Ascending aorta (tissue), 2 donors: ENCODE measurements at regions of chr2 and their contacts with region 1.

Region 1: DNA sequence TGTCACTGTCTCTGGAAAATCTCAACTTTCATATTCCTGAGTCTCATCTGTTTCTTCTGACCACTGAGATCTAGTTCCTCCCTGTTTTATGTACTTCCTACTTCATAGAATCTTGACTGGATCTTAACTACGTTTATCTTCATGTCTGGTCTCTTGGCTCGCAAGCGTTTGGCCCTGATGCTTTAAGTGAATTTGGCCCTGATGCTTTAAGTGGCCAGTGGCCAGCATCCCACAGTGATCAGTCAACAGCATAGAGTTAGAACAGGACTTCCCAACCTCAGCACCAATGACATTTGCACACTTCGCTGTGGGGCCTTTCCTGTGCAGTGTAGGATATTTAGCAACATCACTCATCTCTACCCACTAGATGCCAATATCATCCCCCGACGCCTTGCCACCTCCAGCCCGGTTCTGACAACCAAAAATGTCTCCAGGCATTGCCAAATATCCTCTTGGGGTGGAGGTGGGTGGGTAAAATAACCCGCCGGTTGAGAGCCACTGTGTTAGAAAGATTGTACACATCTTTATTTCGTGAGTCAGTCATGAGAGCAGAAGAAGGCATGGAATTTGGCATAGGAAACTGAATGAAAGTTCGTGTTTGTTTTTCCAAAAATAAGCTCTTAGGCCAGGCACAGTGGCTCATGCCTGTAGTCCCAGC is 12.2 kb downstream of the TM4SF20 start:
- DNase-seq: peak in 1 of 2 donors; percentile 83
- H3K4me3 ChIP-seq: no peak overlapping the region
- H3K27ac ChIP-seq: peak overlapping the region; percentile 51 to 85
- H3K4me1 ChIP-seq: peaks cover 0 to 34% of the 10 kb centered on the region in 2 donors
- H3K27me3 ChIP-seq: no peaks in the 10 kb centered on the region
- CTCF ChIP-seq: no peak

Region 2: GRCh38 chr2:227324995-227325838 is 41.7 kb before region 1 on chr2 and contains the start of gene MFF:
- intact Hi-C with region 1: loop called (anchors 2 kb)
- DNase-seq: peak; percentile 65 to 95
- H3K4me3 ChIP-seq: peak within 1 kb of the TSS; percentile 91 to 95
- H3K27ac ChIP-seq: peak within 1 kb of the TSS; percentile 94 to 95
- H3K4me1 ChIP-seq: peaks cover 0 to 9% of the 10 kb centered on the region in 2 donors
- H3K27me3 ChIP-seq: no peaks in the 10 kb centered on the region
- CTCF ChIP-seq: peak in 1 of 3 experiments; percentile 35
- total RNA-seq, gene MFF: 65.9 TPM

Region 3: DNA sequence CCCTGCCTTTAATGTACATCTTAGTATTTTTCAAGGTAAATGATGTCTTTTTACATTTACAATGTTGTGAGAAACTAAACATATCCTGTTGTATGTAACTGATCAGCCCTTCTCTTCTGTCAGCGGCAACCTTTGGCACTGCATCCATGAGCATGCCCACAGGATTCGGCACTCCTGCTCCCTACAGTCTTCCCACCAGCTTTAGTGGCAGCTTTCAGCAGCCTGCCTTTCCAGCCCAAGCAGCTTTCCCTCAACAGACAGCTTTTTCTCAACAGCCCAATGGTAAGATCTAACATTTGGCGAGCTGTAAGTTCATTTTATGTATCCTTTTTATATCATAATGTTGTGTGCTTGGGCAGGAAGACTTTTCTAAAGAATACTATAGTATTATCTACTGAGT is 184.9 kb after region 1 on chr2:
- intact Hi-C with region 1: no loop called
- DNase-seq: no peak
- H3K4me3 ChIP-seq: no peak overlapping the region
- H3K27ac ChIP-seq: no peak overlapping the region
- H3K4me1 ChIP-seq: no peaks in the 10 kb centered on the region
- H3K27me3 ChIP-seq: no peaks in the 10 kb centered on the region
- CTCF ChIP-seq: no peak